Breast epithelium (tissue), 4 donors: ENCODE measurements at regions of chr6 and their contacts with region 1.

Region 1: GRCh38 chr6:111367393-111368088 is 115.5 kb downstream of the REV3L start:
- DNase-seq: no peak
- H3K4me3 ChIP-seq: no peak overlapping the region
- H3K27ac ChIP-seq: no peak overlapping the region
- H3K4me1 ChIP-seq: no peaks in the 10 kb centered on the region
- H3K27me3 ChIP-seq: no peaks in the 10 kb centered on the region
- CTCF ChIP-seq: no peak
- POLR2A ChIP-seq: no peak

Region 2: GRCh38 chr6:111015389-111016124 is 352.0 kb before region 1 on chr6:
- intact Hi-C with region 1: loop called (anchors 5 kb)
- DNase-seq: no peak
- H3K4me3 ChIP-seq: no peak overlapping the region
- H3K27ac ChIP-seq: no peak overlapping the region
- H3K4me1 ChIP-seq: no peaks in the 10 kb centered on the region
- H3K27me3 ChIP-seq: no peaks in the 10 kb centered on the region
- CTCF ChIP-seq: no peak
- POLR2A ChIP-seq: no peak